ENCODE measurements at regions of chr6 and their contacts with region 1.

Region 1: GRCh38 chr6:25992413-25993037 is 29.9 kb downstream of the TRIM38 start:
- DNase-seq: peak; percentile 95
- H3K4me3 Mint-ChIP-seq: peak overlapping the region; percentile 95
- H3K27ac Mint-ChIP-seq: peak overlapping the region; percentile 91
- H3K4me1 Mint-ChIP-seq: peaks cover 24% of the 10 kb centered on the region
- H3K27me3 Mint-ChIP-seq: no peaks in the 10 kb centered on the region

Region 2: DNA sequence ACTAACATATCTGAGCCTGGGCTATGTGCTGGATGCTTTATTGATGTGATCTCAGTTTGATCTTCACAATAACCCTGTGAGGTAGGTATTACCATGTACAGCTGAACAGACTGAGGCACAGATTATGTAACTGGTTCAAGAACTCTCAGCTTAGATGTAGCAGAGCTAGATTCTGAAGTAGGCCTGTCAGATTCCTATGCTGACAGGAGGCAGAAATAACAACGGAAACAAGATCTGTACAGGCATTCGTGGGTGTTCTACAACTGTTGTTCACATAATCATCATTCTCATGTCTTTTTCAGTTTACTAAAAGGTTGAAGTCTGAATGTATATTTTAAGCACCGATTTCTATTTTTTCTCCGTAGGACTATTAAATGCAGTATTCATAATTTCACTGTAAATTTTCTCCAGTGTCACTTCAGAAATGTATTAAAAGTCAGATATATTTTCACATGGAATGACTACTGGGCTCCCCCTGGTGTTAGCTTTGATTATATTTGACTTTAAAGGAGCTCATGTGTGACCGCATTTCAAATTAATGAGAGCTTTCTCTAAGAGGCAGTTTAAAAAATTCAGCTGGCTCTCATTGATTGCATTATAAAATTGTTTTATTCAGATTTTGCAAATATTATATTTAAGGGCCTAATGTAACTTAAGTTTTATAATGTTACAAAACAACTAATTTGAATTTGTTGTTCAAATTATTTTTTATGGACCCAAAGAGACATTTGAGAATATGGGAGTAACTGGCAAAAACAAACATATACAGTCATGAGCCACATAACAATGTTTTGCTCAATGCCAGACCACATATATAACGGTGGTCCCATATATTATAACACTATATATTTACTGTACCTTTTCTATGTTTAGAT is 274.4 kb before region 1 on chr6:
- CTCF ChIA-PET with region 1: interaction called, 10 read pairs
- intact Hi-C with region 1: loop called (anchors 1 kb)
- DNase-seq: no peak
- H3K4me3 Mint-ChIP-seq: no peak overlapping the region
- H3K27ac Mint-ChIP-seq: no peak overlapping the region
- H3K4me1 Mint-ChIP-seq: no peaks in the 10 kb centered on the region
- H3K27me3 Mint-ChIP-seq: peaks cover 9% of the 10 kb centered on the region

Region 3: DNA sequence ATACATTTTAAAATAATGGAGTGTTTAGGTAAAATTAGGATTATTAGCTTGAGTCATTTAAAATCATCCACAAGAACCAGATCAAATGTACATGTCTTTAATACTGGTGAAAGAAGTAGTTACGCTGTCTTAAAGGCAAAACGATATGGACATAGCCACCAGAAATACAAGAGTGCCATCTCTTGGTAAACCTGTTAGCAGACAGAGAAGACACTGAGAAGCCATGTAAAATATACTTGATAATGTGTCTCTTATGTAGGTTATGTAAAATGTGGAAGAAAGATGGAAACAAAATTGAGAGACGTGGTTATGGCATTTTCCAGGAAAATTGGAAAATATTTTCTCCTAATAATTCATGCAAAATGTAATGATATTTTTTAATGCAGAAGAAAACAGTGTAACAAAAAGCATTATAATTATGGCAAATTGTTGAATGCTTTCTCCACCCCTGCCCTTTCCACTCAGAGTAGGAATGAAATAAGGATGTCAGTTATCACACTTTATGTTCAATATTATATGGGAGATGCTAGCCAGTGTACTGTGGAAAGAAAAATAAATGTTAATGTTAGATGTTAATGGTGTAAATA is 49.9 kb before region 1 on chr6:
- CTCF ChIA-PET with region 1: interaction called, 3 read pairs
- intact Hi-C with region 1: loop called (anchors 5 kb)
- DNase-seq: peak; percentile 12
- H3K4me3 Mint-ChIP-seq: no peak overlapping the region
- H3K27ac Mint-ChIP-seq: no peak overlapping the region
- H3K4me1 Mint-ChIP-seq: peaks cover 18% of the 10 kb centered on the region
- H3K27me3 Mint-ChIP-seq: no peaks in the 10 kb centered on the region

Region 4: DNA sequence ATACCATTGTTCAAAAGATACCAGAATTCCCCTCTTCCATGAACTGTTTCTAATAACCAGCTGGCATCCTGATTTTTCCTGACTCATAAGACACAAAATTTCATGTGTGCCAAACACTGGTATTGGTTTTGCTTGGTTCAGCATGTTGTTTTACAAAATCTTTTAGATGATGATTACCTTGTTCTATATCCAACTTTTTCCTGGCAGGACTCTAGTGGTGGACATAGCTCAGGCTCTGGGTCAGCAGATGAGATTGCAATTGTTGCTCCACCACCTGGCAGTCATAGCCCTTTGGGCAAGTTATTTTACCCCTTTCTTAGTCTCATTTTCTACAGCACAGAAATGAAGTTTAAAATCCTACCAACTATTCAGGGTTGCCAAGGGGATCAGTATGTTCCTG is 23.8 kb before region 1 on chr6:
- CTCF ChIA-PET with region 1: interaction called, 16 read pairs
- intact Hi-C with region 1: no loop called
- DNase-seq: no peak
- H3K4me3 Mint-ChIP-seq: peak overlapping the region; percentile 16
- H3K27ac Mint-ChIP-seq: peak overlapping the region; percentile 60
- H3K4me1 Mint-ChIP-seq: peaks cover 81% of the 10 kb centered on the region
- H3K27me3 Mint-ChIP-seq: no peaks in the 10 kb centered on the region

Region 5: DNA sequence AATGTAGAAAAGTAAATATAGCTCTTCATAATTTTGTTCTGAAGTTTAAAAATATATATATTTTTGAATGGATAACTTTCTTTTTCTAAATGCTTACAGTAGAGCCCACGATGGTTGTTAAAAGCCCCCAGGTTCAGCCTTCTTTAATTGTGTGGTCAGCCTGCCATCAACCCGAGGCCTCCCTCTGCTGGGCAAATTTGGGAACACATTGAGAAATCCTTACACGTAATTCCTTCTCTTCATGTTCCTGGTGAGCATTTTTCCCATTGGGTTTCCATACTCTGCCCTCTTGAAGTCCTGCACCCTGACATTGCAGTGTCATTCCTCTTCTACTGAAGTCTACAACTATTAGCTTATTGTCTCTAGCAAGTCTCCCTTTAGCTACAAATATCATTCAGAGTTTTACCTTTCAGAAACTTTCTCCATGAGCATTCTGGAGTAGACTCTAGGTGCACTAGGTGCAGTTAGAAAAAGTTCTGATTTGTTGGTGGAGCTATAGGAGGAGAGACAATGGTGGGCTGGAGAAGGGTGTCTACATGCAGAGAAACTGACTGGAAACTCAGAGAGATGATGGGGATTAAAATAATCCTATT is 10.7 kb after region 1 on chr6:
- CTCF ChIA-PET with region 1: interaction called, 63 read pairs
- intact Hi-C with region 1: no loop called
- DNase-seq: peak; percentile 63
- H3K4me3 Mint-ChIP-seq: no peak overlapping the region
- H3K27ac Mint-ChIP-seq: no peak overlapping the region
- H3K4me1 Mint-ChIP-seq: peaks cover 3% of the 10 kb centered on the region
- H3K27me3 Mint-ChIP-seq: no peaks in the 10 kb centered on the region

Region 6: DNA sequence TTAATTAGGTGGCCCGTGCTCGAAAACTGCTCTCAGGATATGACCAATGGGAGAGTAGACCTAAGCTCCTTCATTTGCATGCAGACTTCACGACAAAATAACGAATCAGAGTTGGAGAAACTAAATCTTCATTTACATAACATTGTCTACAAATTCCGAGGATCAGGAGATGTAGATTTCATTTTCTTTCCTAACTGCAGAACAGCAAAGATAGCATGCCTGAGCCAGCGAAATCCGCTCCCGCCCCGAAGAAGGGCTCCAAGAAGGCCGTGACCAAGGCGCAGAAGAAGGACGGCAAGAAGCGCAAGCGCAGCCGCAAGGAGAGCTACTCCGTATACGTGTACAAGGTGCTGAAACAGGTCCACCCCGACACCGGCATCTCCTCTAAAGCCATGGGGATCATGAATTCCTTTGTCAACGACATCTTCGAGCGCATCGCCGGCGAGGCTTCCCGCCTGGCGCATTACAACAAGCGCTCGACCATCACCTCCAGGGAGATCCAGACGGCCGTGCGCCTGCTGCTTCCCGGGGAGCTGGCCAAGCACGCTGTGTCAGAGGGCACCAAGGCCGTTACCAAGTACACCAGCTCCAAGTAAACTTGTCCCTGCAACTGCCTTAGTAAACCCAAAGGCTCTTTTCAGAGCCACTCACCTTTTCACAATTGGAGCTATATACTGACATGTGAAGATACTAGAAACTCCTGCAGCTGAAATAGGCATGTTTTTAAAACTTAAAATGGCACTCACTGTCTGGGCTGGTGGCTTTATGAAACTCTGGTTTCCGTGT is 191.2 kb after region 1 on chr6:
- CTCF ChIA-PET with region 1: no interaction called
- intact Hi-C with region 1: no loop called
- DNase-seq: peak; percentile 73
- H3K4me3 Mint-ChIP-seq: peak overlapping the region; percentile 86
- H3K27ac Mint-ChIP-seq: peak overlapping the region; percentile 89
- H3K4me1 Mint-ChIP-seq: peaks cover 30% of the 10 kb centered on the region
- H3K27me3 Mint-ChIP-seq: no peaks in the 10 kb centered on the region